Common myeloid progenitor, CD34-positive (primary cell): ENCODE measurements at regions of chr17 and their contacts with region 1.

Region 1: DNA sequence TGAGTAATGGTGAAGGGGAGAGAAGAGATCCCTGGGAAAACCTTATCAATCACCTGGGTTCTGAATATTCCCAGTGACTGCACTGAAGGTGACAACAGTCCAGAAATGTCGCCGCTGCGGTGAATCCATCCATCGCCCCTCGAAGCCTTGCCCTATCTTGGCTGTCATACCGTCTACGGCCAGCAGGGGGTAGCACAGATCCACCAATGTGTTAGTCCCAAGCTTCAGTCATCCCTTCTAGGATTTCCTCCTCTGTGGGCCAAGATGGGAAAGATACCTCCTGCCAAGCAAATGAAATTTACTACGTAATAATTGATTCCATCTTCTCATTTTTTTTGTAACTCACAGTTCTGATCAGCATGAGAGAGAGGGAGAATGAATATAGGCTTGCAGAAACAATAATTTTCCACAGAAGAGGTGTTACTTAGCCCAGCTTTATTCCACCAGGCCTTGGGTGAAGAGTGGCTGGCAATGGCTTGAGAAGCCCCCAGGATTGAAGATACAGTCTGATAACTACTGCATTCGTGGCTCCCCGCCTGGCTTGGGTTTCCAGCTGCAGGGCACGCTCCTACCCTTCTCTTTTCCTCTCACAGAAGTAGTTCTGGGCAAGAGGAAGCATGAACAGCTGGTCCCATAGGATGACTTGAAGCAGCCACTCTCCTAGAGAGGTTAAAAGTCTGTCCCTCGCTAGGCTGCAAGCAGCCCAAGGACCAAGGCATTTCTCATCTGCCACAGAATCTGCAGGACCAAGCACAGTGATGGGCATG is 2.6 kb upstream of the FMNL1 start:
- DNase-seq: peak; percentile 72 to 84 (median 74)
- H3K4me3 ChIP-seq: peak overlapping the region in 1 of 7 experiments; percentile 23
- H3K27ac ChIP-seq: no peak overlapping the region
- H3K4me1 ChIP-seq: peaks cover 15 to 42% (median 34%) of the 10 kb centered on the region in 4 experiments
- H3K27me3 ChIP-seq: no peaks in the 10 kb centered on the region

Region 2: DNA sequence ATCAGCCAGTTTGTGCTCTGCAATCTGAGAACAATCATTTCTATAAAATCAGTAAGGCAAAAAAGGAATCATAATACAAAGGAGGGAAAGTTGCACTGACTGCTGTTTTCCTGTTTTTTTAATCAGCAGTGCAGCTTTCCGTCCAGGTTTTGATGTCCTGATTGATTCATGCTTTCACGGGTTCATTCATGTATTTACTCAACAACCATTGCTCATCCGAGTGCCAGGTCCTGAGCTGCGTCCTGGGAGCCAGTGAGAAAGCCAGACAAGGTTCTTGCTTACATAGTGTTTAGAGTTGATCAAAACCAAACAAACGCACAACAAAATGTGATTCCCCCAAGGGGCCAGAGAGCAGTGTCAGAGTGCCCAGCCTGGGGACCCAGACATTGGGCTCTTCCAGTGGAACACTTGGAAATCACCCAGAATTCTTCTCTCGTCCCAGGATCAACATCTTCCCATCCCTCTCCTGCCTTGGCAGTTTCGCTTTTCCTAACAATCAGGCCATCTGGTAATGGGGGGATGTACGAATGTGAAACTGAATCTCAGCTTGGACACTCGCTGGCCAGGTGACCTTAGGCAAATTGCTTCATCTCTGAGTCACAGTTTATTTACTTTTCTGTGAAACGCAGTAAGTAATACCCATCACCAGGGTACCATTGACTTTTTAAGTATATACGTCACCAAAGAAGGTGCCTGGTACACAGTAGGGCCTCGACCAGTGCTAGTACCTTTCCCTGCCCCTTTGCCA is 237.7 kb before region 1 on chr17:
- CTCF ChIA-PET with region 1: no interaction called
- POLR2A ChIA-PET with region 1: no interaction called
- DNase-seq: no peak
- H3K4me3 ChIP-seq: no peak overlapping the region
- H3K27ac ChIP-seq: no peak overlapping the region
- H3K4me1 ChIP-seq: no peaks in the 10 kb centered on the region
- H3K27me3 ChIP-seq: peaks cover under 1 to 78% (median 31%) of the 10 kb centered on the region in 5 experiments

Region 3: GRCh38 chr17:45235416-45236281 is 16.6 kb after region 1 on chr17:
- CTCF ChIA-PET with region 1: interaction called, 420 read pairs
- POLR2A ChIA-PET with region 1: interaction called, 35 read pairs
- DNase-seq: peak; percentile 82 to 90 (median 83)
- H3K4me3 ChIP-seq: no peak overlapping the region
- H3K27ac ChIP-seq: peak overlapping the region in 1 of 2 experiments; percentile 19
- H3K4me1 ChIP-seq: peaks cover 11 to 44% (median 23%) of the 10 kb centered on the region in 4 experiments
- H3K27me3 ChIP-seq: no peaks in the 10 kb centered on the region

Region 4: DNA sequence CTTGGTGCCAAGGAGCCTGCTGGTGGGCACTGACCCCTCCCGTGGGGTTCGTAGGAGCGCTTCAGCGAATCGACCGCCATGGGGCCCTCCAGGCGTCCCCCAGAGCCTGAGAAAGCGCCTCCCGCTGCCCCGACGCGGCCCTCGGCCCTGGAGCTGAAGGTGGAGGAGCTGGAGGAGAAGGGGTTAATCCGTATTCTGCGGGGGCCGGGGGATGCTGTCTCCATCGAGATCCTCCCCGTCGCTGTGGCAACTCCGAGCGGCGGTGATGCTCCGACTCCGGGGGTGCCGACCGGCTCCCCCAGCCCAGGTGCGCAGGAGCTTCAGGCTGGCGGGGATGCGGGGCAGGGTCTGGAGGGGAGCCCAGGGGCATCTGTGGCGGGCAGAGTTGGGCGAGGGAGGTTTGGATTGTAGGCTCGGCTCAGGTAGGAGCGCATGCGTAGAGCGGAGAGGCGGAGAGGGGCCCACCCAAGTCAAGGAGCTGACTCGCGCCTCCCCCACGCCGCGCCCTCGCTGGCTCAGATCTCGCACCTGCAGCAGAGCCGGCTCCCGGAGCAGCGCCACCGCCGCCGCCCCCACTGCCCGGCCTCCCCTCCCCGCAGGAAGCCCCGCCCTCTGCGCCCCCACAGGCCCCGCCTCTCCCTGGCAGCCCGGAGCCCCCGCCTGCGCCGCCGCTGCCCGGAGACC is 22.4 kb after region 1 on chr17:
- CTCF ChIA-PET with region 1: interaction called, 420 read pairs
- POLR2A ChIA-PET with region 1: interaction called, 31 read pairs
- DNase-seq: no peak
- H3K4me3 ChIP-seq: no peak overlapping the region
- H3K27ac ChIP-seq: no peak overlapping the region
- H3K4me1 ChIP-seq: peaks cover 0 to 7% (median 4%) of the 10 kb centered on the region in 4 experiments
- H3K27me3 ChIP-seq: no peaks in the 10 kb centered on the region

Region 5: GRCh38 chr17:45247429-45248131 is 28.5 kb after region 1 on chr17:
- CTCF ChIA-PET with region 1: interaction called, 14 read pairs
- POLR2A ChIA-PET with region 1: interaction called, 3 read pairs
- DNase-seq: peak; percentile 86 to 92 (median 89)
- H3K4me3 ChIP-seq: peak overlapping the region; percentile 36 to 75 (median 66)
- H3K27ac ChIP-seq: peak overlapping the region in 1 of 2 experiments; percentile 74
- H3K4me1 ChIP-seq: peaks cover 0 to 30% (median 25%) of the 10 kb centered on the region in 4 experiments
- H3K27me3 ChIP-seq: no peaks in the 10 kb centered on the region

Region 6: GRCh38 chr17:45256114-45256966 is 37.3 kb after region 1 on chr17:
- CTCF ChIA-PET with region 1: interaction called, 14 read pairs
- POLR2A ChIA-PET with region 1: interaction called, 4 read pairs
- DNase-seq: peak; percentile 15 to 60 (median 28)
- H3K4me3 ChIP-seq: peak overlapping the region in 3 of 7 experiments; percentile 23 to 26 (median 24)
- H3K27ac ChIP-seq: no peak overlapping the region
- H3K4me1 ChIP-seq: peaks cover 2 to 25% (median 17%) of the 10 kb centered on the region in 4 experiments
- H3K27me3 ChIP-seq: no peaks in the 10 kb centered on the region

Region 7: DNA sequence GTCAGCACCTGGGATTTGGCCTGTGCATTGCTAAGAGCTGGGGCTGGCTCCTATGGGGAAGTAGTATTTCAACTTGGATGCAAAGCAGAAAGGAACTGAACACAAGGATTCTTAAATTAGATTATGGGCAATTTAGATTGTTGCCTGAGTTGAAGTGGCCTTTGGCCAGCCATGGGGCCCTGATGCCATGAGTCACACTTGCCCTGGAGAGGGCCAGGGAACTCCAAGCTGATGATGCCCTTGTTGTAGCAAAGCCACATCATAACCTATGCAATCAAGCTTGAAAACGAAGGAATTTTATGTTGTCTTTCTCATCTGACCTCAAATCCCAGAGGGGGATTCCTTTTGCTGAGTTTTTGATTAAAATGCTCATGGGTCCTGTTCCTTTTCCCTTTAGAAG is 46.7 kb after region 1 on chr17:
- CTCF ChIA-PET with region 1: interaction called, 10 read pairs
- POLR2A ChIA-PET with region 1: interaction called, 3 read pairs
- DNase-seq: no peak
- H3K4me3 ChIP-seq: no peak overlapping the region
- H3K27ac ChIP-seq: no peak overlapping the region
- H3K4me1 ChIP-seq: peaks cover 4 to 19% (median 14%) of the 10 kb centered on the region in 4 experiments
- H3K27me3 ChIP-seq: no peaks in the 10 kb centered on the region

Region 8: GRCh38 chr17:45648642-45649041 is 429.6 kb after region 1 on chr17:
- CTCF ChIA-PET with region 1: no interaction called
- POLR2A ChIA-PET with region 1: no interaction called
- DNase-seq: no peak
- H3K4me3 ChIP-seq: no peak overlapping the region
- H3K27ac ChIP-seq: no peak overlapping the region
- H3K4me1 ChIP-seq: peaks cover 8 to 16% (median 12%) of the 10 kb centered on the region in 4 experiments
- H3K27me3 ChIP-seq: peaks cover 0 to 12% (median 0%) of the 10 kb centered on the region in 5 experiments